ENCODE measurements at regions of chr3 and their contacts with region 1.

Region 1: GRCh38 chr3:60192297-60193114 is 1058.7 kb downstream of the FHIT start:
- DNase-seq: no peak
- H3K4me3 Mint-ChIP-seq: peak overlapping the region; percentile 14
- H3K27ac Mint-ChIP-seq: peak overlapping the region; percentile 86
- H3K4me1 Mint-ChIP-seq: peaks cover 52% of the 10 kb centered on the region
- H3K27me3 Mint-ChIP-seq: no peaks in the 10 kb centered on the region

Region 2: GRCh38 chr3:59866076-59866475 is 326.4 kb before region 1 on chr3:
- intact Hi-C with region 1: loop called (anchors 5 kb)
- DNase-seq: no peak
- H3K4me3 Mint-ChIP-seq: no peak overlapping the region
- H3K27ac Mint-ChIP-seq: peak overlapping the region; percentile 2
- H3K4me1 Mint-ChIP-seq: peaks cover 31% of the 10 kb centered on the region
- H3K27me3 Mint-ChIP-seq: no peaks in the 10 kb centered on the region

Region 3: GRCh38 chr3:59978979-59979378 is 213.5 kb before region 1 on chr3:
- intact Hi-C with region 1: loop called (anchors 2 kb)
- DNase-seq: no peak
- H3K4me3 Mint-ChIP-seq: peak overlapping the region; percentile 35
- H3K27ac Mint-ChIP-seq: peak overlapping the region; percentile 92
- H3K4me1 Mint-ChIP-seq: peaks cover 26% of the 10 kb centered on the region
- H3K27me3 Mint-ChIP-seq: no peaks in the 10 kb centered on the region

Region 4: DNA sequence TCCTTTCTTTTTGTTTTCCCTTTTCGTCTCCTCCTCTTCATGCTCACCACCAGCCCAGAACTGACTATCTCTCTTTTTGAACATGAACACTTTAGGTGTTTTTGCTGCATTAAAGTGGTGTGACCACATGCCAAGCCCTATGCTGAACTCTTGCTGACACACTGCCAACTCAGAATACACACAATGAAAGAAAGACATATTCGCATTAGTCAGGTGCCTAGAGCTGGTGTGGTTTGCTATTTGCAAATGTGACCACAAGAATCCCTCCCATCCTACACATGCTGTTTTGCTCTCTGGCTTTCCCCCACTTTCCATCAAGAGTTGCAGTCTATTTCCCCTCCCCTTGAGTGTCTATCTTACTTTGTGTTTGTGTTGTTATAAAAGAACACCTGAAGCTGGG is 174.9 kb before region 1 on chr3:
- intact Hi-C with region 1: loop called (anchors 2 kb)
- DNase-seq: peak; percentile 63
- H3K4me3 Mint-ChIP-seq: peak overlapping the region; percentile 61
- H3K27ac Mint-ChIP-seq: peak overlapping the region; percentile 98
- H3K4me1 Mint-ChIP-seq: peaks cover 64% of the 10 kb centered on the region
- H3K27me3 Mint-ChIP-seq: no peaks in the 10 kb centered on the region

Region 5: DNA sequence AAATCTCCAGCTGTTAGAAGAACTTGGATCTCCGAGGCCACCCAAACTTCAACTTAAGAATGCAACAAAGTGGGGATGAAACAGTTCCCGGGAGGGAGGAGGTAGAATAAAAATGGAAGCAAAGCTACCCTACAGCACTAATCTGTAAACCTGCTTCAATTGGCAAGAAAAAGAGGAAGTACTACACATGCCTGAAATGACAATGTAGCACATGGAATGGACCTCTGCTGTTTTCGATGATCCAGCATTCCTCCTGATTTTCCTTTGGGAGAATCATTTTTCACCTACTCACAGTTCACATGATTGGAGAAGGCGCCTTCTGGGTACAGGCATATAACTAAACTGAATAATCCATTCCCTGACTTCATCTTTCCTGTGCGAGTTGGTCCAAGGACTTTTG is 22.8 kb before region 1 on chr3:
- intact Hi-C with region 1: no loop called
- DNase-seq: no peak
- H3K4me3 Mint-ChIP-seq: no peak overlapping the region
- H3K27ac Mint-ChIP-seq: no peak overlapping the region
- H3K4me1 Mint-ChIP-seq: peaks cover 7% of the 10 kb centered on the region
- H3K27me3 Mint-ChIP-seq: no peaks in the 10 kb centered on the region

Region 6: GRCh38 chr3:60365360-60365759 is 172.9 kb after region 1 on chr3:
- intact Hi-C with region 1: loop called (anchors 1 kb)
- DNase-seq: no peak
- H3K4me3 Mint-ChIP-seq: no peak overlapping the region
- H3K27ac Mint-ChIP-seq: no peak overlapping the region
- H3K4me1 Mint-ChIP-seq: peaks cover 25% of the 10 kb centered on the region
- H3K27me3 Mint-ChIP-seq: no peaks in the 10 kb centered on the region

Region 7: DNA sequence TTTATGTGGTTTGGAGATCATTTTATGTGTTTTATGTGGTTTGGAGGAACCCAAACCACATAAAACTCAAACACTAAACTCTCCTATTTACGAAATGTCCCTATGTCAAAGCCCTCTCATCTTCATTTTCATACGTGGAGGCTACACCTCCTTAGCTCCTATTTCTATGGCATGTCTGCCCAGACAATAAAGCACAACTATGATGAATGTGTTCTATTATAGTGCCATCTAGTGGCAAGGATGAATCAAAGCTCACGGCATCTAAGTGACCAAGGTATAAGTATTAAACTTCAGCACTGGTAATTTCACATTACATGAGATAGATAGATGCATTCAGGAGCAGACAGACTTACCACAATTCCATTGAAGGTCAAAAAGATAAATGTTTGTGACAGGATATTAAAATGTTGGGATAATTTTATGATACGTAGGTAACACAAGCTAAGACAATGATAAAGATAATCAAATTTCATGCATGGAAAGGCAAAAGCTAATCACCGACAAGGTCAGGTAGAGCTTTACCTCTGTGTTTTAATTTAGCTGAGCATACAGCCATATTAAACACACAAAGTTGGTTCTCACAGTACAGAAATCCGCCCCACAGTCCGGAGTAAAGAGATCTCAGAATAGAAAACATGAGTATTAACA is 1189.4 kb after region 1 on chr3:
- intact Hi-C with region 1: loop called (anchors 10 kb)
- DNase-seq: no peak
- H3K4me3 Mint-ChIP-seq: no peak overlapping the region
- H3K27ac Mint-ChIP-seq: no peak overlapping the region
- H3K4me1 Mint-ChIP-seq: peaks cover 3% of the 10 kb centered on the region
- H3K27me3 Mint-ChIP-seq: peaks cover 20% of the 10 kb centered on the region